PC-3 (cell line): ENCODE measurements at regions of chr1 and their contacts with region 1.

Region 1: DNA sequence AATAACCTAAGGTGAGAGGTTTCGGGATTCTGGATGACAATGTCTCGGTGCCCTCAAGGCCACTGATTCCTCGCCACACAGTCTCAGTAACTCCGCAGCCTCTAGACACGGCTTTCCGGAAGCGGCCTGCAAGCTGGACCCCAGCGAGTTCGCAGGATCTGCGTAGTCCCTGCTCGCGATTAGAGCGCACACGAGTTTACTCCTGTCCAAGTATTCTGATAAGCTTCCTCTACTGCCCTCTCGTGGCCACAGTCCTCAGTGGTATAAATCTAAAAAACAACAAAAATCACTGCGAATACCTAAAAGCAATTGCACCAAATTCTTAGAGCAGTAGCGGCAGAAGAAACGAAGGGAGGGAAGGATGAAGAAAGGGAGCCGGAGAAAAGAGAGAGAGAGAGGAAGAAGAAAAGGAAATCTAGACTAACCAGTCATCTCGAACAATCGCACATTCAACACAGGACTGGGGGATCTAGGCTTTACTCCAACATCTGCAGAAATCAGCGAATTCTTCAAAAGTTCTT is 1.1 kb upstream of the PLXNA2 start:
- DNase-seq: peak; percentile 97
- ATAC-seq: peak; percentile 53
- H3K4me3 ChIP-seq: peak overlapping the region; percentile 93
- H3K27ac ChIP-seq: no peak overlapping the region
- H3K4me1 ChIP-seq: peaks cover 22% of the 10 kb centered on the region
- H3K27me3 ChIP-seq: no peaks in the 10 kb centered on the region
- CTCF ChIP-seq: peak; percentile 95

Region 2: GRCh38 chr1:208036109-208036808 is 209.0 kb before region 1 on chr1:
- CTCF ChIA-PET with region 1: no interaction called
- POLR2A ChIA-PET with region 1: no interaction called
- intact Hi-C with region 1: loop called (anchors 1 kb)
- DNase-seq: peak; percentile 68
- ATAC-seq: peak; percentile 89
- H3K4me3 ChIP-seq: no peak overlapping the region
- H3K27ac ChIP-seq: no peak overlapping the region
- H3K4me1 ChIP-seq: no peaks in the 10 kb centered on the region
- H3K27me3 ChIP-seq: no peaks in the 10 kb centered on the region
- CTCF ChIP-seq: peak; percentile 68

Region 3: GRCh38 chr1:208085655-208086515 is 159.4 kb before region 1 on chr1:
- CTCF ChIA-PET with region 1: no interaction called
- POLR2A ChIA-PET with region 1: no interaction called
- intact Hi-C with region 1: no loop called
- DNase-seq: no peak
- ATAC-seq: no peak
- H3K4me3 ChIP-seq: no peak overlapping the region
- H3K27ac ChIP-seq: no peak overlapping the region
- H3K4me1 ChIP-seq: no peaks in the 10 kb centered on the region
- H3K27me3 ChIP-seq: no peaks in the 10 kb centered on the region
- CTCF ChIP-seq: no peak

Region 4: GRCh38 chr1:208132287-208132883 is 112.9 kb before region 1 on chr1:
- CTCF ChIA-PET with region 1: interaction called, 24 read pairs
- POLR2A ChIA-PET with region 1: no interaction called
- intact Hi-C with region 1: loop called (anchors 1 kb)
- DNase-seq: peak; percentile 93
- ATAC-seq: peak; percentile 100
- H3K4me3 ChIP-seq: peak overlapping the region; percentile 2; the same call in 1 of the 2 replicates
- H3K27ac ChIP-seq: peak overlapping the region; percentile 46
- H3K4me1 ChIP-seq: peaks cover 16% of the 10 kb centered on the region
- H3K27me3 ChIP-seq: no peaks in the 10 kb centered on the region
- CTCF ChIP-seq: peak; percentile 99

Region 5: DNA sequence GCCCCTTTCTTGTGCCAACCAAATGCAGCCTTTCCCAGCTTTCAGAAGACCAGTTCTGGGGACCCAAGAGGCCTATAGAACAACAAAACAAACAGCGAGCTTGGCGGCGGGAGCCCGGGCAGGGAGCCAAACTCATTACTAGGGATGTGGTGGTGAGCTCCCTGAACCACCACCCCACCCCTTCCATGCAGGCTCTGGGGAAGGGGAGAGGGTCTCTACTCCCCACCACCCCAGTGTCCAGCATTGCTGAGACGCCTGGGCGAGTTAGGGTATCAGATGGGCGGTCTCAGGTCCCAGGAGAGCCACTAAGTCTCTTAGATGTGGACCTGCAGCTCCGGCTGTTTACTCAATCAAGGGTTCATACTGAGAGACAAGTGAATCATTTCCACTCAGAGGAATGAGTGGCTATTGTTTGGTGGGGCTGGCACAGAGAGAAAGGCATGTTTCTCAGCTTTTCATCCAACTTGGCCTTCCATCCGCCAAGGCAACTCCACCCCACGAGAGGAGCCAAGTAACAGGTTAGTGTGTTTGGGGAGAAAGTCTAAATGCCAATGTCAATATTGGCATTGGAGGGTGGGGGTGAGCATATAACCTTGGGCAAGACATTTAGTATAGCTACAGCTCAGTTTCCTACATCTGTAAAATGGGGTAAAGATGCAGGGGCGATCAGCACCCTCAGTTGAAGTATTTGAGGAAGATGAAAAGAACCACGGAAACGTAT is 42.0 kb before region 1 on chr1:
- CTCF ChIA-PET with region 1: interaction called, 11 read pairs
- POLR2A ChIA-PET with region 1: interaction called, 14 read pairs
- intact Hi-C with region 1: loop called (anchors 1 kb)
- DNase-seq: peak; percentile 98
- ATAC-seq: peak; percentile 80
- H3K4me3 ChIP-seq: peak overlapping the region; percentile 49
- H3K27ac ChIP-seq: peak overlapping the region; percentile 91
- H3K4me1 ChIP-seq: peaks cover 49% of the 10 kb centered on the region
- H3K27me3 ChIP-seq: no peaks in the 10 kb centered on the region
- CTCF ChIP-seq: no peak

Region 6: GRCh38 chr1:208423526-208423925 is 178.3 kb after region 1 on chr1:
- CTCF ChIA-PET with region 1: no interaction called
- POLR2A ChIA-PET with region 1: no interaction called
- intact Hi-C with region 1: no loop called
- DNase-seq: no peak
- ATAC-seq: no peak
- H3K4me3 ChIP-seq: no peak overlapping the region
- H3K27ac ChIP-seq: no peak overlapping the region
- H3K4me1 ChIP-seq: no peaks in the 10 kb centered on the region
- H3K27me3 ChIP-seq: peaks cover 3% of the 10 kb centered on the region; the same call in 1 of the 2 replicates
- CTCF ChIP-seq: no peak

Region 7: GRCh38 chr1:209318181-209319056 is 1073.2 kb after region 1 on chr1:
- CTCF ChIA-PET with region 1: no interaction called
- POLR2A ChIA-PET with region 1: interaction called, 18 read pairs
- intact Hi-C with region 1: no loop called
- DNase-seq: peak; percentile 97
- ATAC-seq: peak; percentile 87
- H3K4me3 ChIP-seq: peak overlapping the region; percentile 37
- H3K27ac ChIP-seq: peak overlapping the region; percentile 93
- H3K4me1 ChIP-seq: peaks cover 35% of the 10 kb centered on the region
- H3K27me3 ChIP-seq: no peaks in the 10 kb centered on the region
- CTCF ChIP-seq: no peak